A549 (cell line): ENCODE measurements at regions of chr22 and their contacts with region 1.

Region 1: GRCh38 chr22:17830043-17830961 is 56.0 kb upstream of the BID start:
- DNase-seq: peak; percentile 77
- ATAC-seq: peak; percentile 90 to 95
- H3K4me3 ChIP-seq: no peak overlapping the region
- H3K27ac ChIP-seq: no peak overlapping the region
- H3K4me1 ChIP-seq: no peaks in the 10 kb centered on the region
- CTCF ChIP-seq: peak; percentile 71
- EP300 ChIP-seq: no peak
- POLR2A ChIP-seq: no peak
- RAD21 ChIP-seq: peak; percentile 85 to 92

Region 2: GRCh38 chr22:17818180-17818579 is 12.1 kb before region 1 on chr22:
- CTCF ChIA-PET with region 1: interaction called, 25 read pairs
- POLR2A ChIA-PET with region 1: no interaction called
- DNase-seq: no peak
- ATAC-seq: no peak
- H3K4me3 ChIP-seq: no peak overlapping the region
- H3K27ac ChIP-seq: no peak overlapping the region
- H3K4me1 ChIP-seq: no peaks in the 10 kb centered on the region
- CTCF ChIP-seq: no peak
- EP300 ChIP-seq: no peak
- POLR2A ChIP-seq: no peak
- RAD21 ChIP-seq: no peak

Region 3: GRCh38 chr22:17846326-17846992 is 16.2 kb after region 1 on chr22:
- CTCF ChIA-PET with region 1: interaction called, 15 read pairs
- POLR2A ChIA-PET with region 1: no interaction called
- DNase-seq: no peak
- ATAC-seq: no peak
- H3K4me3 ChIP-seq: no peak overlapping the region
- H3K27ac ChIP-seq: no peak overlapping the region
- H3K4me1 ChIP-seq: no peaks in the 10 kb centered on the region
- CTCF ChIP-seq: no peak
- EP300 ChIP-seq: no peak
- POLR2A ChIP-seq: no peak
- RAD21 ChIP-seq: no peak

Region 4: DNA sequence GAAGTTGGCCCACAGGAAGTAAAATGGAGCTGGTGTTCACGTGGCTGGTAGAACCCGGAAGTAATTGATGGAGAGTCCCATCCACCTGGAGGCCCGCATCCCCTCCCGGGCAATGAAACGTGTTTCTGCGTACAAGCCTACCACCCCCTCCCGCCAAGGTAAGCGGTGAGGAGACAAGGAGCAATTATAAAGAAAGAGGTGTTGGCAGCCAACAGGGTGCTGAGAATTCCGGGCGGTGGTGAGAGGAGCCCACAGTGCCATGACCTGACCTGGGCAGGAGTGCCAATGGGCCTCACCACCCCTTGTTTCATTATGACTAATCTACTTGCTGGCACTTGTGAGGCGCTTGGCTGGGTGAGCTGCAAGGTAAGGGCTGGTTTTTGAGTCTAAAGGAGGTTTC is 27.7 kb after region 1 on chr22:
- CTCF ChIA-PET with region 1: interaction called, 12 read pairs
- POLR2A ChIA-PET with region 1: no interaction called
- DNase-seq: no peak
- ATAC-seq: no peak
- H3K4me3 ChIP-seq: no peak overlapping the region
- H3K27ac ChIP-seq: no peak overlapping the region
- H3K4me1 ChIP-seq: no peaks in the 10 kb centered on the region
- CTCF ChIP-seq: no peak
- EP300 ChIP-seq: no peak
- POLR2A ChIP-seq: no peak
- RAD21 ChIP-seq: no peak

Region 5: DNA sequence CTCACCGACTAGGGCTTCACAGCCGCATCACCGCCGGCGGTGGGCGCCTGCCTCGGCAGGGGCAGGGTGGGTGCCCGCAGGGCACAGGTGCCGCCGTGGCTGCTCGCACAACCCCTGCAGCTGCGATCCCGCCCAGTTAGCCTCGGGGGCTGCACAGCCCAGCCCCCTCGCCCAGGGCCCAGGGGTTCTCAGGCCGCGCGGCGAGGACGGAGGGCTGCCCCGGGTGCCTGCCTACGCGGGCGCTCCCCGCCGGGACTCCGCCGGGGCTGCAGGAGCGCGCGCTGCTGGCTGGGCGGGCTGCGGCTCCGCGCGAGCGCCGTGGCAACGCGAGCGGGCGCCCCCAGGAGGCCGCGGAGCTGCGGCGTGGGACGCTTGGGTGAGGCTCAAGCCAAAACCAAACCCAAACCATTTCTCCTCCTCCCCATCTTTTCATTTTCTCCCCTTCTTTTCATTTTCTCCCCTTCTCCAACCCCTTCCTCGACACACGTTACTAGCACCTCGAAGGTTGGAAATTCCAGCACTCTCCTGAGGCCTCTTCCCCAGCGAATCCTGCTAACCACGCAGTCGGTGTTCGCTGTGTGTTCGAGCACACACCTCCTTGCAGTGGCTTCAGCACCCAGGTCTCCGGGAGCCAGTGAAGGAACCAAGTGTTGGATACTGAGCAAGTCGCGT is 194.1 kb after region 1 on chr22 and contains the start of gene MICAL3:
- CTCF ChIA-PET with region 1: interaction called, 23 read pairs
- POLR2A ChIA-PET with region 1: no interaction called
- DNase-seq: peak; percentile 57 to 61
- ATAC-seq: peak; percentile 89
- H3K4me3 ChIP-seq: peak within 1 kb of the TSS; percentile 76
- H3K27ac ChIP-seq: peak within 1 kb of the TSS; percentile 89 to 97
- H3K4me1 ChIP-seq: peaks cover 25% of the 10 kb centered on the region
- CTCF ChIP-seq: peak; percentile 63
- EP300 ChIP-seq: no peak
- POLR2A ChIP-seq: 0 out of 2 replicates have a peak, but pooled peaks have one; percentile 18
- RAD21 ChIP-seq: peak; percentile 28 to 62
- polyA plus RNA-seq, gene MICAL3: 18.7 and 20.5 TPM in 2 replicates

Region 6: GRCh38 chr22:18070556-18071306 is 240.4 kb after region 1 on chr22:
- CTCF ChIA-PET with region 1: interaction called, 138 read pairs
- POLR2A ChIA-PET with region 1: interaction called, 6 read pairs
- DNase-seq: no peak
- ATAC-seq: no peak
- H3K4me3 ChIP-seq: no peak overlapping the region
- H3K27ac ChIP-seq: peak overlapping the region; percentile 17 to 33; a peak in 2 of 6 replicates
- H3K4me1 ChIP-seq: peaks cover 13% of the 10 kb centered on the region
- CTCF ChIP-seq: no peak
- EP300 ChIP-seq: no peak
- POLR2A ChIP-seq: no peak
- RAD21 ChIP-seq: no peak

Region 7: GRCh38 chr22:18091916-18092526 is 261.7 kb after region 1 on chr22:
- CTCF ChIA-PET with region 1: interaction called, 45 read pairs
- POLR2A ChIA-PET with region 1: no interaction called
- DNase-seq: peak; percentile 40 to 78
- ATAC-seq: peak; percentile 88 to 92
- H3K4me3 ChIP-seq: peak overlapping the region; percentile 20; the same call in 1 of the 3 replicates
- H3K27ac ChIP-seq: peak overlapping the region; percentile 81 to 93
- H3K4me1 ChIP-seq: peaks cover 31% of the 10 kb centered on the region
- CTCF ChIP-seq: no peak
- EP300 ChIP-seq: no peak
- POLR2A ChIP-seq: no peak
- RAD21 ChIP-seq: peak in 1 of 2 experiments; percentile 30; a peak in 1 of 5 replicates